Mammary epithelial cell (primary cell): ENCODE measurements at regions of chr1 and their contacts with region 1.

Region 1: GRCh38 chr1:205150651-205151428 is 29.1 kb upstream of the RBBP5 start:
- DNase-seq: no peak
- H3K4me3 ChIP-seq: no peak overlapping the region
- H3K27ac ChIP-seq: no peak overlapping the region
- H3K4me1 ChIP-seq: no peaks in the 10 kb centered on the region
- H3K27me3 ChIP-seq: no peaks in the 10 kb centered on the region
- CTCF ChIP-seq: no peak

Region 2: DNA sequence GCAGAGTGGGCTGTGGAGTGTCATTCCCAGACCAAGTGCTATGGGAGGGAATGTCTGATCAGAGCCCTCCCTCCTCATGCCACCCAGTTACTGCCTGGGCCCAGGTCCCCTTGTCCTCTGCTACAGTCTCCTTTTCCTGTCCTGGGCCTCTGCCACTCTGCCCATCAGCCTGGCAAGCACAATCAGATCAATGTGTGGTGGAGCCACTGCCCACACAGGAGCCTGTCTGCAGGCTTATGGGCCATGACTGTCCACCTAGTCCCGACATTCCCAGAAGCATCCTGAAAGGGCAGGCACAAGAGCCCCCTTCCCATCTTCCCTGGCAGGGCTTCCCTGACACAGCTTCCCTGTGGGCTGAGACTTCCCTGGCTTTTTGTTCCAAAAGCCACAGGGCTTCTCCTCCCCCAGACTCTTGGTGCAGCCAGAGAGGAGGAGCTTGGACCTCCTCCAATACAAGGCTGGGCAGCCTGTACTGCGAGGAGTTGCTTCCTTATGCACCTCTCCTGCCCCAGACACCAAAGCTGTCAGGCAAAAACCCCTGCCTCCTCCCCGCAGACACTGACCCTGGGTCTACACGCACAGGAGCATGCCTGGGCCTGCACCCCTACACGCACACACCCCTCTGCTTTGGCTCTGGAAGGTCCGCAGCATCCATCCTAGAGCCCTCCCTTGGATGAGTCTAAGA is 137.0 kb before region 1 on chr1:
- CTCF ChIA-PET with region 1: no interaction called
- dilution Hi-C with region 1: no loop called
- in situ Hi-C with region 1: no loop called
- intact Hi-C with region 1: no loop called
- DNase-seq: peak; percentile 23
- H3K4me3 ChIP-seq: no peak overlapping the region
- H3K27ac ChIP-seq: no peak overlapping the region
- H3K4me1 ChIP-seq: peaks cover 7% of the 10 kb centered on the region
- H3K27me3 ChIP-seq: no peaks in the 10 kb centered on the region
- CTCF ChIP-seq: no peak

Region 3: GRCh38 chr1:205237526-205238484 is 87.0 kb after region 1 on chr1:
- CTCF ChIA-PET with region 1: no interaction called
- dilution Hi-C with region 1: loop called (anchors 5 kb)
- in situ Hi-C with region 1: no loop called
- intact Hi-C with region 1: no loop called
- DNase-seq: no peak
- H3K4me3 ChIP-seq: no peak overlapping the region
- H3K27ac ChIP-seq: no peak overlapping the region
- H3K4me1 ChIP-seq: no peaks in the 10 kb centered on the region
- H3K27me3 ChIP-seq: no peaks in the 10 kb centered on the region
- CTCF ChIP-seq: no peak